Common myeloid progenitor, CD34-positive (primary cell): ENCODE measurements at regions of chr2 and their contacts with region 1.

Region 1: GRCh38 chr2:121530212-121530705 is 421 bp upstream of the RNU4ATAC start:
- DNase-seq: peak; percentile 87 to 93 (median 92)
- H3K4me3 ChIP-seq: peak overlapping the region; percentile 51 to 97 (median 93)
- H3K27ac ChIP-seq: peak overlapping the region; percentile 100
- H3K4me1 ChIP-seq: peaks cover 16 to 40% (median 31%) of the 10 kb centered on the region in 4 experiments
- H3K27me3 ChIP-seq: no peaks in the 10 kb centered on the region

Region 2: DNA sequence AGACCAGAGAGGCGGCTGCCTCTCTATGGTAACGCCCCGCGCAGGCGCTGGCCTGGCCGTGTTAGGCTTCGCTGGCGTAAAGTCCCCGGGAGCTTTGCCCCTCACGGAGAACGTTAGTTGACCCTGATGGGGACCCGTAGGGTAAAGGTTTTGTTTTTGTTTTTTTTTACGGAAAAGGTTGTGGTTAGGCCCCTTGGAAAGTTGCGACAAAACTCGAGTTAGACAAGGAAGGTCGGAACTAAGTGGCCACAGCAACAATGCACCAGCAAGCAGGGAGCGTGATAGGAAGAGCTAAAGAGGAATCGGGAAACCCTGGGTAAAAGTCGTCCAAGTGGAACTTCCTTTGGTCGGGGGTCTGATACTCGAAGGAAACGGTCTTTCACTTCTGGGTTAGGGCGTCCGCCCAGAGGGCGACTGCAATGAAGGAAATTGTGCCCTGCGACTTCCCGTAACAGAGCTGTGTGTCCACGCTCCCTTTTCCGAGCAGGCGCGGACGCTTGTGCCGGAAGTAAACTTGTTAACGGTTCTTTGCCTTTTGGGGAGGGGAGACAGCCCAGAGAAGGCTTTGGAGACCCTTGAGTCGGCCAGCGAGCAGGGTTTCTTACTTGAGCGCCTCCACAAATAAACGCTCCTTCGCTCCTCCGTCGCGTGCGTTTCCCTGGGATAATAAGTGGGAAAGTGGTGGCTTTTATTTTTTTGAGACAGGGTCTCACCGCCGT is 119.5 kb after region 1 on chr2:
- CTCF ChIA-PET with region 1: interaction called, 13 read pairs
- POLR2A ChIA-PET with region 1: interaction called, 36 read pairs
- DNase-seq: peak; percentile 99 to 100 (median 100)
- H3K4me3 ChIP-seq: peak overlapping the region; percentile 80 to 98 (median 93)
- H3K27ac ChIP-seq: peak overlapping the region; percentile 97 to 98
- H3K4me1 ChIP-seq: peaks cover 20 to 42% (median 29%) of the 10 kb centered on the region in 4 experiments
- H3K27me3 ChIP-seq: no peaks in the 10 kb centered on the region

Region 3: GRCh38 chr2:121699421-121700333 is 169.4 kb after region 1 on chr2:
- CTCF ChIA-PET with region 1: interaction called, 16 read pairs
- POLR2A ChIA-PET with region 1: interaction called, 11 read pairs
- DNase-seq: peak; percentile 85 to 98 (median 96)
- H3K4me3 ChIP-seq: peak overlapping the region in 6 of 7 experiments; percentile 9 to 78 (median 39)
- H3K27ac ChIP-seq: no peak overlapping the region
- H3K4me1 ChIP-seq: peaks cover 6 to 30% (median 20%) of the 10 kb centered on the region in 4 experiments
- H3K27me3 ChIP-seq: no peaks in the 10 kb centered on the region

Region 4: DNA sequence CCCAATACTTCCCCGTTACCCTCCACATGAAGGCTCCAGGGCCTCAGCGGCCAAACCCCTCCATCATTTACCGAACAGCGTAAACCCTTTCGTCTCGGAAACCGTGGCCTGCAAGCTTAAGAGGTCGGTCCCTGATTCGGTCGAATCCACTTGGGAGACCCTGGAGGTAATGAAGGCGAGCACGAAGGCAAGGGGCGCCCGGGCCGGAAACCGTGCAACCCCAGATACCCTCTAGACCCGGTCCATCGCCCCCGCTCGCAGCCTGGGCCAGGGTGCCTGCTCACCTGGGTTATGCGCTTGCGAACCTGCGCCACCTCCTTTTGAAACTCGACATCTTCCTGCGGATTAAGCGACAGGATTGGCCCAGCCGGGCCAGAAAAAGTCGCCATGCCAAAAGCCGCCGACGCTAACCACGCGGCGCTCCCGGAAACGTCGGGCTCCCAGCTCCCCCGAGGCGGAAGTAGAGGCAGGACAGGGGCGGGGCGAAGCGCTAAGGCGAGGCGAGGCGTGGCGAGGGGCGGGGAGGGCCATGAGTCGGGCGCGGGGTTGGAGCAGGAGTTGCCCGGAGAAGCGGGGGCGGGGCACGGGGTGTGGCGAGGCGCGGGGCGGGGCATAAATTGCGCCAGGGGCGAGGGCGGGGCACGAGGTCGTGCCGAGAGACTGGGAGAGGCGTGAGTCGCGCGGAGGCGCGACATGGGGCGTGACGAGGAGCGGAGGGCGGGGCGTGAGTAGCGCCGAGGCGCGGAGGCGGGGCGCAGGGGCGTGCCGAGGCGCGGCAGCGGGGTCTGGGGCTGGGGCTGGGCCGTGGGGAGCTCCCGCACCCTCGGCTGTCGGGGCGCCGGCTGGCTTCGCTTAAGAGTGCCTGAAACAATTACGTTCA is 206.4 kb after region 1 on chr2 and contains the start of gene NIFK:
- CTCF ChIA-PET with region 1: interaction called, 3 read pairs
- POLR2A ChIA-PET with region 1: interaction called, 23 read pairs
- DNase-seq: peak; percentile 98 to 99 (median 99)
- H3K4me3 ChIP-seq: peak within 1 kb of the TSS; percentile 86 to 100 (median 95)
- H3K27ac ChIP-seq: peak within 1 kb of the TSS; percentile 65 to 91
- H3K4me1 ChIP-seq: peaks cover 6 to 29% (median 19%) of the 10 kb centered on the region in 4 experiments
- H3K27me3 ChIP-seq: no peaks in the 10 kb centered on the region